Activated CD4-positive, alpha-beta T cell treated with anti-CD3 and anti-CD28 coated beads for 36 hours (primary cell): ENCODE measurements at regions of chr11 and their contacts with region 1.

Region 1: GRCh38 chr11:128164080-128164741 is 423.1 kb downstream of the ETS1 start:
- DNase-seq: no peak
- ATAC-seq: no peak
- H3K4me3 Mint-ChIP-seq: no peak overlapping the region
- H3K27ac Mint-ChIP-seq: no peak overlapping the region
- H3K4me1 Mint-ChIP-seq: peaks cover 6% of the 10 kb centered on the region
- H3K27me3 Mint-ChIP-seq: peaks cover 5% of the 10 kb centered on the region

Region 2: DNA sequence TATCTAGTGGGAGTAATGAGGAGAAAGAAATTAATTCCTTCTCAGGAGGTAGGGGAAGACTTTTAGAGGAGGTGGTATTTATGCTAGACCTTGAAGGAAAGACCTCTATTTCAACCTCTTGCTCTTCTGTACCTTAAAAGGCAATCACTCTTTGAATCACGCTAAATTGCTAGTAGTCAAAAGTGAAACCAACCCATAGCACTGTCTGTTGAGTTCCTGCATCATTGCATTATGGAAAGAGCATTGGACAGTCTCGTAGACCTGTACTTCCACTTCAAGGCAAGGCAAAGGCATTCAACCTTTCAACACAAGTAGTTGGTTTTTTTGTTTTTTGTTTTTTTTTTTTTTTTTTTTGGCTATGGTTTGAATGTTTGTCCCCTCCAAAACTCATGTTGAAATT is 347.2 kb before region 1 on chr11:
- CTCF ChIA-PET with region 1: no interaction called
- POLR2A ChIA-PET with region 1: no interaction called
- intact Hi-C with region 1: no loop called
- DNase-seq: no peak
- ATAC-seq: no peak
- H3K4me3 Mint-ChIP-seq: no peak overlapping the region
- H3K27ac Mint-ChIP-seq: no peak overlapping the region
- H3K4me1 Mint-ChIP-seq: no peaks in the 10 kb centered on the region
- H3K27me3 Mint-ChIP-seq: peaks cover 11% of the 10 kb centered on the region

Region 3: DNA sequence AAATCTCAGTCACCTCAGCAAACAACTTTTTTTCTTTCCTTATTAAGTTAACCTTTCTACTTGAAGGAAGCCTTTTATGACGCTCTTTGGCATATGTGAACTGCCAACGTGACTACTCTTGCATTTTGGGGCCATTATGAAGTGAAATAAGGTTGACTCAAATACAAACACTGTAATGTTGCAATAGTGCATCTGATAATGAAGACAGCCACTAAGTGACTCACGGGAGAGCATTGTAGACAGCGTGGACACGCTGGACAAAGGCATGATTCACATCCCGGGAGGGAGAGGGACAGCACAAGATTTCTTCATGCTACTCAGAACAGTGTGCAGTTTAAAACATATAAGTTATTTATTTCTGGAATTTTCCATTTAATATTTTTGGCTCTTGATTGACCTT is 137.6 kb before region 1 on chr11:
- CTCF ChIA-PET with region 1: interaction called, 19 read pairs
- POLR2A ChIA-PET with region 1: no interaction called
- intact Hi-C with region 1: no loop called
- DNase-seq: no peak
- ATAC-seq: no peak
- H3K4me3 Mint-ChIP-seq: no peak overlapping the region
- H3K27ac Mint-ChIP-seq: no peak overlapping the region
- H3K4me1 Mint-ChIP-seq: peaks cover 8% of the 10 kb centered on the region
- H3K27me3 Mint-ChIP-seq: no peaks in the 10 kb centered on the region